ENCODE measurements at regions of chr3 and their contacts with region 1.

Region 1: DNA sequence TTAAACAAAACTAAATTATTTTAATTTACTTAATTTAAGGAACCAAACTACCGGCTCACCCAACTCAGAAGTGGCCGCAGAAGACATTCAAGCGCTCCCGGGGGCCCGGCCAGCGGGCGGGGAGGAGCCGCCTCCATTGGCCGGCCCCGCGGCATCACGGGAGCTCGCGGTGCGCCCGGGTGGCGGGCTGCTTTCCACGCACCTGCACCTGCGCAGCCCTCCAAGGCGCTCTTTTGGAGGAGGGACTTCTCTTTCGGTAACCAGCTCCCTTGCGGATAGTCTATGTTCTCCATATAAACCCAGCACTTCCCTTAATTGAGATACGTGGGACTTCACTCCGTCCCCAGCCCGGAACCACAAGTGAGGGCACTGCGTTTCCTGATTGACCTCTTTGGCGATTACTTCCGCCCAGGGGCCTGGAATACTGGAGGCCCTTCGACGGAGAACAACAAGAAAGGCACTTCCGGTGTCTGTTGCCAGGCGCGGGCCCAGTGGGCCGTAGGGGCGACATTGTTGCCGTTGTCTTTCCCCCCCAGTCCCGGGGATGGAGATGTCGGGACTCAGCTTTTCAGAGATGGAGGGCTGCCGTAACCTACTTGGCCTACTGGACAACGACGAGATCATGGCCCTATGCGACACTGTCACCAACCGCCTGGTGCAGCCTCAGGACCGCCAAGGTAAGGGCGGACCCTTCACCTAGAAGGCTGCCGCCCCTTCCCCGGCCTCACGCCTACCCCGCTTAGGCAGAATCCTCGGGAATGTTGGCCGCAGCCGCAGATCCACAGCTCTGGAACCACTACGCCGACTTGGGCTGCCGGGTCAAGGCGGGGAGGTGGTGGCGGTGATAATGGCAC is at the start of gene C3orf38:
- DNase-seq: peak; percentile 79 to 88
- ATAC-seq: peak; percentile 88 to 92 (median 92)
- H3K4me3 ChIP-seq: peak within 1 kb of the TSS; percentile 86
- H3K4me3 Mint-ChIP-seq: peak within 1 kb of the TSS; percentile 95
- H3K27ac ChIP-seq: peak within 1 kb of the TSS; percentile 92
- H3K27ac Mint-ChIP-seq: peak within 1 kb of the TSS; percentile 91 to 93
- H3K4me1 ChIP-seq: peaks cover 15% of the 10 kb centered on the region
- H3K4me1 Mint-ChIP-seq: peaks cover 17 to 28% of the 10 kb centered on the region in 2 donors
- H3K27me3 ChIP-seq: no peaks in the 10 kb centered on the region
- H3K27me3 Mint-ChIP-seq: no peaks in the 10 kb centered on the region
- CTCF ChIP-seq: no peak
- total RNA-seq, gene C3orf38: 52.5 to 60.4 (median 54.7) TPM

Region 2: DNA sequence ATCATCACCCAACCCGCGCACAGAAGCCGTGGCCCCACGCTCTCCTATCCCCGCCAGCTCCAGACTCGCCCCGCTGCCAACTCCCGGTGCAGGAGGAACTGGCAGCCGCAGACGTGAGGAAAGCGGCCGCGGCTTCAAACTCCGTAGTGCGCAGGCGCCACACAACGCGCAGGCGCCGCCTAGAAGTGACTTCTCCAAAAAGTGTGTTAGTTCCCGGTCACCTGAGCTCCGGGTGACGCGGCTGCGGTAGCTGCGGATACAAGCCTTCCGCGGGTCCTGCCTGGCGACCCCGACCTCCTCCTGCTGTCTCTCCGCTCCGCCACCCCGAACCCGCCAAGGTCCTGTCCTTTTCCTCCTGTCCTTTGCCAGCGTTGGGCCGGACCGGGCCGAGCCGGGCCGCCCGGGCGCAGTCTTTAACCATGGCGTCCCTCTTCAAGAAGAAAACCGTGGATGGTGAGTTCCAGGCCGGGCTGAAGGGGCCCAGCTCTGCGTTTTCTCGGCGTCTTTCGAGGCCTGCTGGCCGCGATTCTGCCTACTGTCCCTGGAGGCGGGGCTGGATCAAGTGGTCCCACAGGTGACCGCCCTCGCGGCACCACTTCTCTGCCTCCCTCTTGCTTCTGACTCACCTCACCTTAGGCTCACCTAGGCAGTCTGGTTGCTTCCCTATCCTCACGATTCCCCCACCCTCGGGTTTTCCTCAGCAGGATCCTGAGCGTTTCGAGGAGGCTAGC is 922.5 kb before region 1 on chr3 and contains the start of gene CHMP2B:
- intact Hi-C with region 1: loop called (anchors 2 kb)
- DNase-seq: peak; percentile 91 to 96
- ATAC-seq: peak; percentile 88 to 93 (median 91)
- H3K4me3 ChIP-seq: peak within 1 kb of the TSS; percentile 94
- H3K4me3 Mint-ChIP-seq: peak within 1 kb of the TSS; percentile 99
- H3K27ac ChIP-seq: peak within 1 kb of the TSS; percentile 87
- H3K27ac Mint-ChIP-seq: peak within 1 kb of the TSS; percentile 94 to 100
- H3K4me1 ChIP-seq: peaks cover 4% of the 10 kb centered on the region
- H3K4me1 Mint-ChIP-seq: peaks cover 33 to 43% of the 10 kb centered on the region in 2 donors
- H3K27me3 ChIP-seq: peaks cover 3% of the 10 kb centered on the region
- H3K27me3 Mint-ChIP-seq: peaks cover 7 to 14% of the 10 kb centered on the region in 2 donors
- CTCF ChIP-seq: no peak
- total RNA-seq, gene CHMP2B: 22.0 to 34.2 (median 29.1) TPM